Gastrocnemius medialis (tissue), 4 donors: ENCODE measurements at regions of chr17 and their contacts with region 1.

Region 1: GRCh38 chr17:50547035-50547735 is at the start of gene SPATA20:
- DNase-seq: peak; percentile 87 to 90
- ATAC-seq: peak; percentile 77 to 80
- H3K4me3 ChIP-seq: peak within 1 kb of the TSS; percentile 61 to 71 (median 67)
- H3K27ac ChIP-seq: peak within 1 kb of the TSS; percentile 76 to 84 (median 82)
- H3K4me1 ChIP-seq: peaks cover 16 to 21% of the 10 kb centered on the region in 2 donors
- H3K27me3 ChIP-seq: no peaks in the 10 kb centered on the region
- CTCF ChIP-seq: peak; percentile 96 to 100 (median 98)
- POLR2A ChIP-seq: peak; percentile 70 to 84
- total RNA-seq, gene SPATA20: 22.3 to 67.9 (median 29.1) TPM

Region 2: GRCh38 chr17:50626037-50626574 is 78.9 kb after region 1 on chr17:
- in situ Hi-C with region 1: loop called (anchors 5 to 25 kb)
- intact Hi-C with region 1: loop called (anchors 1 kb)
- DNase-seq: peak; percentile 16 to 64
- ATAC-seq: peak; percentile 79 to 88
- H3K4me3 ChIP-seq: no peak overlapping the region
- H3K27ac ChIP-seq: no peak overlapping the region
- H3K4me1 ChIP-seq: no peaks in the 10 kb centered on the region
- H3K27me3 ChIP-seq: peaks cover 0 to 13% (median 7%) of the 10 kb centered on the region in 3 donors
- CTCF ChIP-seq: peak; percentile 34 to 82 (median 79)
- POLR2A ChIP-seq: no peak

Region 3: DNA sequence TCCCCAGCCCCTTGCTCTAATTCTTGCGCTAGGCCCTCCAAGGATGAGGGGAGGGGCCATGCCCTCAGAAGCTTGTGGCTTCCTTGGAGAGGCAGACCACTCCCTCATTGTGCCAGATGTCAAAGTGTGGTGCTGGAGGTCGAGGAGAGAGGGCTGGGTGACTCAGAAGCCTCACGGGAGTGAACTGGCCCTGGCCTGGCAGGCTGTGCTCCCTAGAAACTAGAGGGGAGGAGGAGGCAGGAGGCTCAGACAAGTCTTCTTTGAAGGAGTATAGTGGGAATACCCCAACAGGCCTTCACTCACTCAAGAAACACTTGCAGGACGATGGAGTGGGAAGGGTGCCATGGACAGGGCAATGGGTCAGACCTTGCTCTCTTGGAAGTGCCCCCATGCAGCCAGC is 142.1 kb after region 1 on chr17:
- in situ Hi-C with region 1: loop called (anchors 10 kb)
- intact Hi-C with region 1: loop called (anchors 2 kb)
- DNase-seq: no peak
- ATAC-seq: no peak
- H3K4me3 ChIP-seq: no peak overlapping the region
- H3K27ac ChIP-seq: no peak overlapping the region
- H3K4me1 ChIP-seq: peaks cover 11 to 20% of the 10 kb centered on the region in 2 donors
- H3K27me3 ChIP-seq: no peaks in the 10 kb centered on the region
- CTCF ChIP-seq: no peak
- POLR2A ChIP-seq: no peak

Region 4: GRCh38 chr17:50841949-50842354 is 294.8 kb after region 1 on chr17:
- in situ Hi-C with region 1: loop called (anchors 5 to 25 kb)
- intact Hi-C with region 1: loop called (anchors 1 kb)
- DNase-seq: peak; percentile 25 to 59
- ATAC-seq: peak; percentile 39 to 45
- H3K4me3 ChIP-seq: no peak overlapping the region
- H3K27ac ChIP-seq: no peak overlapping the region
- H3K4me1 ChIP-seq: peaks cover 18 to 19% of the 10 kb centered on the region in 2 donors
- H3K27me3 ChIP-seq: no peaks in the 10 kb centered on the region
- CTCF ChIP-seq: peak; percentile 77 to 85 (median 84)
- POLR2A ChIP-seq: no peak